ENCODE measurements at regions of chr2 and their contacts with region 1.

Region 1: GRCh38 chr2:222318026-222318711 is 19.4 kb upstream of the PAX3 start:
- DNase-seq: peak; percentile 78
- CTCF ChIP-seq: peak; percentile 64

Region 2: GRCh38 chr2:222490131-222490530 is 172.0 kb after region 1 on chr2:
- CTCF ChIA-PET with region 1: interaction called, 11 read pairs
- POLR2A ChIA-PET with region 1: no interaction called
- DNase-seq: peak; percentile 19
- CTCF ChIP-seq: no peak

Region 3: GRCh38 chr2:222554517-222554916 is 236.3 kb after region 1 on chr2:
- CTCF ChIA-PET with region 1: interaction called, 155 read pairs
- POLR2A ChIA-PET with region 1: no interaction called
- DNase-seq: no peak
- CTCF ChIP-seq: no peak

Region 4: DNA sequence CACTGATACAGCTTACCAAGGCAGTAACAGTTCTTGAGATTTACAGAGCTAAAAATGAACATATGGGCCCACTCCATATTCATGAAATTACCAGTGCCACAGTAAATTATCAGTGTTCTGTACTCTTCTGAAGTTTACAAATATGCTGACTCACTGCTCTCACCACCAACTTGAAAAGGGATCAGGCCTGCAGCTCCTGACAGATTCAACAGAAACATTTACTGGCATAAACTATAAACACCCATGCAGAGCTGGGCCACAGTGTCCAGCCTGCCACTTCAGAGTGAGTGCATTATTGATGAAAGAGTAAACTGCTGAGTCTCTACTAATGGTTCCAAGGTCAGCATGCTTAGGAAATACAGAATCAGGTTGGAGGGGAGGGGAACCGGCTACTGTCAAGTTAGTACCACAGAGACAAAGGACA is 254.6 kb after region 1 on chr2:
- CTCF ChIA-PET with region 1: interaction called, 155 read pairs
- POLR2A ChIA-PET with region 1: no interaction called
- DNase-seq: no peak
- CTCF ChIP-seq: no peak

Region 5: GRCh38 chr2:222613715-222614331 is 295.7 kb after region 1 on chr2:
- CTCF ChIA-PET with region 1: interaction called, 74 read pairs
- POLR2A ChIA-PET with region 1: no interaction called
- DNase-seq: peak; percentile 65
- CTCF ChIP-seq: peak; percentile 73

Measured in GM10248 (cell line).